Prostate gland (tissue), 2 donors: ENCODE measurements at regions of chr18 and their contacts with region 1.

Region 1: GRCh38 chr18:71850602-71851001 is 693.5 kb downstream of the CBLN2 start:
- DNase-seq: no peak
- H3K4me3 ChIP-seq: no peak overlapping the region
- H3K27ac ChIP-seq: no peak overlapping the region
- H3K4me1 ChIP-seq: no peaks in the 10 kb centered on the region
- H3K27me3 ChIP-seq: no peaks in the 10 kb centered on the region
- CTCF ChIP-seq: no peak
- POLR2A ChIP-seq: no peak

Region 2: GRCh38 chr18:71809711-71810110 is 40.9 kb before region 1 on chr18:
- intact Hi-C with region 1: loop called (anchors 5 kb)
- DNase-seq: no peak
- H3K4me3 ChIP-seq: no peak overlapping the region
- H3K27ac ChIP-seq: no peak overlapping the region
- H3K4me1 ChIP-seq: no peaks in the 10 kb centered on the region
- H3K27me3 ChIP-seq: no peaks in the 10 kb centered on the region
- CTCF ChIP-seq: no peak
- POLR2A ChIP-seq: no peak